ENCODE measurements at regions of chr13 and their contacts with region 1.

Region 1: DNA sequence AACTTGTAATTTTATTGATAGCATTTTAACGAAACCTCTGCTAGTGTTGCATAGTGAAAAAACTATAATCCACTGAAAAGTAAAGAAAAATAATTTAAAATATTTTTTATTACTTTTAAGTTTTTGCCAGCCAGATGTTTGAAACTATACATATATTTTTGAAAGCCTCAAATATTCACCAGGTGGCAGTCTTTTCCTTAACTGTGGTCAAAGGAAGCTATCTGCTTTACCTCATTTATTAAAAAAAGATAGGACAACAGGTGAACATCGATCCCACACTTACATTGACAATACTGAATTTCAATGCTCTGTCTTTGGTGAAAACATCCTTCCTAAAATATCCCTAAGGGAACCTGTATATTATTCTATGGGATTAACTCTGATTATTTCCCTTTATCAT is 100.5 kb downstream of the TRPC4 start:
- DNase-seq: peak; percentile 53
- H3K4me3 ChIP-seq: no peak overlapping the region
- H3K27ac ChIP-seq: no peak overlapping the region
- H3K4me1 ChIP-seq: no peaks in the 10 kb centered on the region
- CTCF ChIP-seq: peak; percentile 81

Region 2: DNA sequence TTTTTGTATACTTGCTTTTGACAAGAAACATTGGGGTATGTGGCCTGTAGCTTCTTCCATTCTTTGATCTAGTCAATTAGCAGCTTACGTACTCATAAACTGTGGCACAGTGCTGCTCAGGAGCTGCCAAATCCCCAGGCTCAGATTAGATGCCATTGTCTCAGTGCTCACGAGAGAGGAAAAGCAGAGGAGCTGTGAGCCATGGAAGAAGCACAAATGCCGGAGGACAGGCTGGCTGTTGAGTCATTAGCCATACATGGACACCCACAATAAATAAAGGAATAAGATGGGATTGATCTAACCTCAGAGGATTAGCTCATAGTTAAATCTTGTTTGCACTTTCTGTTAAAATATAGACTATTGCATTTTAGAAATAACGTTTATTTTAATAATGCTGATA is 292.2 kb before region 1 on chr13:
- CTCF ChIA-PET with region 1: no interaction called
- POLR2A ChIA-PET with region 1: no interaction called
- intact Hi-C with region 1: no loop called
- DNase-seq: no peak
- H3K4me3 ChIP-seq: no peak overlapping the region
- H3K27ac ChIP-seq: no peak overlapping the region
- H3K4me1 ChIP-seq: no peaks in the 10 kb centered on the region
- CTCF ChIP-seq: no peak

Region 3: DNA sequence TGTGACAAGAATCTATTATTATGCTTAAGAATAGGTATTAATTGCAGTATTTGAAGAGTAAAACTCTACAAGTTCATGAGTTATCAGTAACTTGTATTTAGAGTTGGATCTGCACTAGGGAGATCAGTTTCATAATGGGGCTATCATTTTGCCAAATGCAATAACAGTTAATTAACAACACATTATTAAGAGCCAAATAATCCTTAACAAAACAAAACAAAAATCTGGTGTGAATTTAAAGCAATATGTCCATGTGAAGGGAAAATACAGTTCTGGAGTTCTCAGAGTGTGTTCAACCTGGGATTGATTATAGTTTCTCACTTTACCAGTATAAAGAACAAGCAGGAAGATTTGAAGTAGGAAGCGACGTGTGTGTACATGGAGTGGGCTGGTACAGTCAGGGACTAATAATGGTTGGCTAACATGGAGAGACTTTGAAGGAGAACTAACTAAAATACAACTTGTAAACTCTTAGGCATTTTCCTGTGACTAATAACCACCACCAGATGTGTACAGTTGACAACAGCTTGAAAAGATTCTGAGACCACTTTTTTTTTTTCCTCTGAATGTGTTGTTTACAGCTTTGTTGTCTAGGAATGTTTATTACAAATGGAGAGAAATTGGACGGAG is 229.0 kb before region 1 on chr13:
- CTCF ChIA-PET with region 1: no interaction called
- POLR2A ChIA-PET with region 1: no interaction called
- intact Hi-C with region 1: no loop called
- DNase-seq: no peak
- H3K4me3 ChIP-seq: no peak overlapping the region
- H3K27ac ChIP-seq: no peak overlapping the region
- H3K4me1 ChIP-seq: no peaks in the 10 kb centered on the region
- CTCF ChIP-seq: no peak

Region 4: GRCh38 chr13:37944869-37945442 is 175.9 kb after region 1 on chr13:
- CTCF ChIA-PET with region 1: no interaction called
- POLR2A ChIA-PET with region 1: interaction called, 3 read pairs
- intact Hi-C with region 1: loop called (anchors 10 kb)
- DNase-seq: peak; percentile 1
- H3K4me3 ChIP-seq: no peak overlapping the region
- H3K27ac ChIP-seq: no peak overlapping the region
- H3K4me1 ChIP-seq: no peaks in the 10 kb centered on the region
- CTCF ChIP-seq: no peak

Region 5: GRCh38 chr13:37978680-37979079 is 209.6 kb after region 1 on chr13:
- CTCF ChIA-PET with region 1: no interaction called
- POLR2A ChIA-PET with region 1: no interaction called
- intact Hi-C with region 1: no loop called
- DNase-seq: no peak
- H3K4me3 ChIP-seq: no peak overlapping the region
- H3K27ac ChIP-seq: no peak overlapping the region
- H3K4me1 ChIP-seq: no peaks in the 10 kb centered on the region
- CTCF ChIP-seq: no peak

Region 6: GRCh38 chr13:38045307-38046048 is 276.4 kb after region 1 on chr13:
- CTCF ChIA-PET with region 1: no interaction called
- POLR2A ChIA-PET with region 1: interaction called, 5 read pairs
- intact Hi-C with region 1: loop called (anchors 1 kb)
- DNase-seq: peak; percentile 61
- H3K4me3 ChIP-seq: no peak overlapping the region
- H3K27ac ChIP-seq: no peak overlapping the region
- H3K4me1 ChIP-seq: no peaks in the 10 kb centered on the region
- CTCF ChIP-seq: peak; percentile 84

Region 7: GRCh38 chr13:38223089-38223488 is 454.0 kb after region 1 on chr13:
- CTCF ChIA-PET with region 1: no interaction called
- POLR2A ChIA-PET with region 1: no interaction called
- intact Hi-C with region 1: loop called (anchors 2 kb)
- DNase-seq: no peak
- H3K4me3 ChIP-seq: no peak overlapping the region
- H3K27ac ChIP-seq: no peak overlapping the region
- H3K4me1 ChIP-seq: no peaks in the 10 kb centered on the region
- CTCF ChIP-seq: peak; percentile 51; the same call in 1 of the 2 replicates

Region 8: GRCh38 chr13:38582133-38582532 is 813.1 kb after region 1 on chr13:
- CTCF ChIA-PET with region 1: no interaction called
- POLR2A ChIA-PET with region 1: no interaction called
- intact Hi-C with region 1: loop called (anchors 5 kb)
- DNase-seq: peak; percentile 41
- H3K4me3 ChIP-seq: no peak overlapping the region
- H3K27ac ChIP-seq: no peak overlapping the region
- H3K4me1 ChIP-seq: no peaks in the 10 kb centered on the region
- CTCF ChIP-seq: peak; percentile 81

Region 9: DNA sequence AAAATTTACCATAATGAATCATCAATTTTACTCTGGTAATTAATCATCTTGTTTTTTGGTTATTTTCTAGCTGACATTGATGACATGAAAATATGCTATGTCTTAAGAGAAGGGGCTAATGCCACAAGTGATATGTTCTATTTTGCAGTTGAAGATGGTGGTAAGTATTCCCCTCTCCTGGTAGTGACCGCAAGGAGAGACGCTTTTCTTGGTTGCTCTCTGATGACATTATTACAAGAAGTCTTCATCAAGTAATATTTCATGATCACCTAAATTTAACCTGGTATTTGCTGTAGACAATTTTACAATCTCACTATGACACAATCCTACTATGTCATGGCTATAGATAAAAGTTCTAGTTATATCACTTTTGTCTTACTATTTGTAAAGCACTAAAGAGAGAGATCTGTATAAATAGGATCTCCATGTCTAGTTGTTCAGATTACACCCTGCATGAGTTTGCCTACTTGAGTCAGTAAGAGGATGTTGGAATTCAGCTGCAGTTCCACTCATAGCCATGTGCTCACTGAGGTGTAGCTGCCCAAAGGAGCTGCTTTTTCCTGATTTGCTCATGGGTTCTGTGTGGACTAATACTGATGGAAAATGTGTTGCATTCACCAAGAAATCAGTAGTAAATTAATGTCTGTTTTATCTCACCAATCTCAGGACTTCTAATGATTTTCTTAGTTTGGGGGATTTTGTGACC is 928.7 kb after region 1 on chr13:
- CTCF ChIA-PET with region 1: no interaction called
- POLR2A ChIA-PET with region 1: no interaction called
- intact Hi-C with region 1: no loop called
- DNase-seq: no peak
- H3K4me3 ChIP-seq: no peak overlapping the region
- H3K27ac ChIP-seq: no peak overlapping the region
- H3K4me1 ChIP-seq: no peaks in the 10 kb centered on the region
- CTCF ChIP-seq: no peak

Measured in OCI-LY7 (cell line).